ENCODE measurements at regions of chr15 and their contacts with region 1.

Region 1: DNA sequence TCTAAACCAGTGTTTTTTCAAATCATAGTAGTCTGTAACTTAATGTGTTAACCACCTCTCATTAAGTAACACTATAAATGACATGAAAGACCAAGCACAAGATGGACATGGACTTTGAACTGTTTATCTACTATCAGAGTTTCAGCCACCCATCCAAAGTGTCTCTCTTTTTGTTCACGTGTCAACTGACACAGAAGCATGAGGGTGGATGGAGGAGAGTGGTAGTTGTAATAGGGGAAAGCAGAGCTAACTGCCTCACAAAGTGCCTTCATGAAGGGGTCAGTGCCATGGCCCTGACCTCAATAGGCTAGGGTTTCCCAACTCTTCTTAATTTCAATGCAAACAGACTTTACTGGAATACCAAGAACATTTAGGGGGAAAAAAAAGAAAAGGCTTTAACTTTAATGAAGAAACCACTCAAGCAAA is 32.1 kb upstream of the TRPM7 start:
- DNase-seq: no peak
- ATAC-seq: no peak
- H3K4me3 ChIP-seq: no peak overlapping the region
- H3K27ac ChIP-seq: no peak overlapping the region
- H3K4me1 ChIP-seq: no peaks in the 10 kb centered on the region
- H3K27me3 ChIP-seq: no peaks in the 10 kb centered on the region
- CTCF ChIP-seq: no peak

Region 2: DNA sequence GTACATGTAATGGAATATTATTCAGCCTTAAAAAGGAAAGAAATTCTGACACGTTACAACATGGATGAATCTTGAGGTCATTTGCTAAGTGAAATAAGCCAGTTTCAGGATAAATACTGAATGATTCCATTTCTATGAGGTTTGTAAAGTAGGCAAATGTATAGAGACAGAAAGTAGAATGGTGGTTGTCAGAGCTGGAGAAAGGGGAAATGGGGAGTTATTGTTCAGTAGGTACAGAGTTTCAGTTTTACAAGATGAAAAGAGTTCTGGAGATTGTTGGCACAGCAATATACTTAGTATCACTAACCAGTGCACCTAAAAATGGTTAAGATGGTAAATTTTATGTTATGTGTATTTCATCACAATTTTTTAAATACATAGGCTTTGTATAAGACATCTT is 233.9 kb before region 1 on chr15:
- intact Hi-C with region 1: loop called in 1 of 2 experiments (anchors 5 kb)
- DNase-seq: no peak
- ATAC-seq: no peak
- H3K4me3 ChIP-seq: no peak overlapping the region
- H3K27ac ChIP-seq: no peak overlapping the region
- H3K4me1 ChIP-seq: no peaks in the 10 kb centered on the region
- H3K27me3 ChIP-seq: no peaks in the 10 kb centered on the region
- CTCF ChIP-seq: no peak

Region 3: GRCh38 chr15:50590288-50590687 is 128.4 kb before region 1 on chr15:
- intact Hi-C with region 1: loop called in 1 of 2 experiments (anchors 10 kb)
- DNase-seq: no peak
- ATAC-seq: no peak
- H3K4me3 ChIP-seq: no peak overlapping the region
- H3K27ac ChIP-seq: no peak overlapping the region
- H3K4me1 ChIP-seq: no peaks in the 10 kb centered on the region
- H3K27me3 ChIP-seq: no peaks in the 10 kb centered on the region
- CTCF ChIP-seq: no peak

Region 4: GRCh38 chr15:50765195-50765973 is 46.7 kb after region 1 on chr15 and contains the start of gene SPPL2A:
- intact Hi-C with region 1: no loop called
- DNase-seq: peak; percentile 90 to 93
- ATAC-seq: peak; percentile 58 to 75 (median 66)
- H3K4me3 ChIP-seq: peak within 1 kb of the TSS; percentile 90
- H3K27ac ChIP-seq: peak within 1 kb of the TSS; percentile 99
- H3K4me1 ChIP-seq: peaks cover 28% of the 10 kb centered on the region
- H3K27me3 ChIP-seq: no peaks in the 10 kb centered on the region
- CTCF ChIP-seq: no peak
- total RNA-seq, gene SPPL2A: 124 to 303 (median 255) TPM

Region 5: GRCh38 chr15:51573894-51574293 is 855.2 kb after region 1 on chr15:
- intact Hi-C with region 1: no loop called
- DNase-seq: no peak
- ATAC-seq: no peak
- H3K4me3 ChIP-seq: no peak overlapping the region
- H3K27ac ChIP-seq: no peak overlapping the region
- H3K4me1 ChIP-seq: no peaks in the 10 kb centered on the region
- H3K27me3 ChIP-seq: no peaks in the 10 kb centered on the region
- CTCF ChIP-seq: no peak

Measured in psoas muscle (tissue), 8 donors.